ENCODE measurements at regions of chr19 and their contacts with region 1.

Region 1: GRCh38 chr19:6073858-6074708 is 36.2 kb downstream of the RFX2 start:
- DNase-seq: no peak
- H3K4me3 ChIP-seq: no peak overlapping the region
- H3K27ac ChIP-seq: no peak overlapping the region
- H3K4me1 ChIP-seq: peaks cover 8% of the 10 kb centered on the region
- H3K27me3 ChIP-seq: no peaks in the 10 kb centered on the region
- CTCF ChIP-seq: no peak

Region 2: GRCh38 chr19:5904352-5905113 is 169.6 kb before region 1 on chr19 and contains the start of gene VMAC:
- CTCF ChIA-PET with region 1: no interaction called
- POLR2A ChIA-PET with region 1: no interaction called
- intact Hi-C with region 1: no loop called
- DNase-seq: peak; percentile 100
- H3K4me3 ChIP-seq: peak within 1 kb of the TSS; percentile 95
- H3K27ac ChIP-seq: peak within 1 kb of the TSS; percentile 96
- H3K4me1 ChIP-seq: peaks cover 8% of the 10 kb centered on the region
- H3K27me3 ChIP-seq: no peaks in the 10 kb centered on the region
- CTCF ChIP-seq: no peak
- total RNA-seq, gene VMAC: 0.67 and 1.7 TPM in 2 replicates

Region 3: GRCh38 chr19:6092329-6093286 is 18.5 kb after region 1 on chr19:
- CTCF ChIA-PET with region 1: no interaction called
- POLR2A ChIA-PET with region 1: no interaction called
- intact Hi-C with region 1: no loop called
- DNase-seq: peak; percentile 56
- H3K4me3 ChIP-seq: no peak overlapping the region
- H3K27ac ChIP-seq: peak overlapping the region; percentile 31
- H3K4me1 ChIP-seq: peaks cover 23% of the 10 kb centered on the region
- H3K27me3 ChIP-seq: no peaks in the 10 kb centered on the region
- CTCF ChIP-seq: no peak

Region 4: DNA sequence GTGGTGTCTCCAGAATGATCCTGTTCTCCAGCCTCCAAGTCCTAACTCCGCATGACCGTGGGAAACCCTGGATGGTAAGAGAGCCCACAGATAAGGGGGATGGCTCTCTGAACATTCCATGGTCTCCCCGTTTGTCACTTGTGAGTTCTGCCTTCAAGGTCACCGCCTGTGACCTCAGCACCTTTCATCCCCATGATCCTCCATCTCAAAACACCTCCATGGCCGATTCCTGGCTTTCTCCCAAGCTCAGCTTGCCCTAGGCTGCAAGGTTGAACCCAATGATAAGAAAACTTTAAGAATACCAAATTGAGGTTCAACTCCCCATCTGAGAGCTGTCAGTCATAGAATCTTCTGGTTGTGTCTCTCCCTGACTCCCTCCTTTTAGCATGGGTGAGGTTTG is 109.3 kb after region 1 on chr19:
- CTCF ChIA-PET with region 1: interaction called, 11 read pairs
- POLR2A ChIA-PET with region 1: no interaction called
- intact Hi-C with region 1: no loop called
- DNase-seq: no peak
- H3K4me3 ChIP-seq: no peak overlapping the region
- H3K27ac ChIP-seq: no peak overlapping the region
- H3K4me1 ChIP-seq: no peaks in the 10 kb centered on the region
- H3K27me3 ChIP-seq: peaks cover 18% of the 10 kb centered on the region
- CTCF ChIP-seq: no peak

Measured in A673 (cell line).